Transverse colon (tissue), 4 donors: ENCODE measurements at regions of chr15 and their contacts with region 1.

Region 1: GRCh38 chr15:95994418-95994817 is 336.1 kb upstream of the NR2F2 start:
- DNase-seq: no peak
- H3K4me3 ChIP-seq: no peak overlapping the region
- H3K27ac ChIP-seq: no peak overlapping the region
- H3K4me1 ChIP-seq: peaks cover 0 to 5% (median 0%) of the 10 kb centered on the region in 4 donors
- H3K27me3 ChIP-seq: no peaks in the 10 kb centered on the region
- CTCF ChIP-seq: no peak
- EP300 ChIP-seq: no peak
- POLR2A ChIP-seq: no peak

Region 2: DNA sequence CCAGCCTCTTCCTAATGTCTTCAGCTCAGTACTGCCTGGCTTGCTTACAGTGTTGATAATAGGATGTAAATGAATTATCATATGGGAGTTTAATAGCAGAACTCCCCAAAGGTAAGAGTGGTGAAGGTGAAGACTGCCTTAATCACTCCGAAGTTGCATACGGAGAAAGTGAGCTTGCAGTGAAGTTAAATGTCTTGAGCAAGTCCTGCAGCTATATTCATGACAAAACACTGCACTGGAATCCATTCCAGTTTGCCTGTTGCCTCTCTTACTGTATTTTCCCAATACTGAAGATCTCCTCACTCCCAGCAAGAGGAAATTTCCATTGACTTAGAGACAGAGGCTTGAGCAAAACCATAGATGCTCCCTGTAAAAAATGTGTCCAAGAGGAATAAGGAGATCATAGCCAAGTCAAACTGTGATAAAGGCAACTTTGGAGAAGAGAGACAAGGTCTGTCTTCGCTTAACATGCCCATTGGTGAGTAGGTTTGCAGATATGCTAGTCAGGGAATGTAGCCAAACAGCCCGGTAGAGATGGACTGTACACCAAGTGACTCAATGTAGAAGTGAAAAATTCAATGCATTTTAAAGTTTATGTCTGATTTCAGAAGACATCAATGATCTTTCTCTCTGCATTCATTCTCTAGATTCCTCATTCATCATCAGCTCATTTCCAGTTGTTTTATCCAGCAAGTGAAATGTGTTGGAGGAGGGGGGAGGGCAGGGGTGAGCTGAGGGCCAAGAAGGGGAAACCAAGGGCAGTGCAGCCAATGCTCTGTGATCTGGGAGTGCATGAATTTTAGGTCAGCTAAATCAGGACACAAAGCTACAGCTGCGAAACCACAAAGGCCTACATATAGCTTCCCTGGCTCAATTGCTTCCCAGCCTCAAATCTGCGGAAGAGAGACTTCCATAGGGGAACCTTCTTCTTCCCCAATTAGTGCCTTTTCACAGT is 331.0 kb before region 1 on chr15:
- in situ Hi-C with region 1: no loop called
- intact Hi-C with region 1: no loop called
- DNase-seq: no peak
- H3K4me3 ChIP-seq: no peak overlapping the region
- H3K27ac ChIP-seq: no peak overlapping the region
- H3K4me1 ChIP-seq: no peaks in the 10 kb centered on the region
- H3K27me3 ChIP-seq: no peaks in the 10 kb centered on the region
- CTCF ChIP-seq: no peak
- EP300 ChIP-seq: no peak
- POLR2A ChIP-seq: no peak

Region 3: DNA sequence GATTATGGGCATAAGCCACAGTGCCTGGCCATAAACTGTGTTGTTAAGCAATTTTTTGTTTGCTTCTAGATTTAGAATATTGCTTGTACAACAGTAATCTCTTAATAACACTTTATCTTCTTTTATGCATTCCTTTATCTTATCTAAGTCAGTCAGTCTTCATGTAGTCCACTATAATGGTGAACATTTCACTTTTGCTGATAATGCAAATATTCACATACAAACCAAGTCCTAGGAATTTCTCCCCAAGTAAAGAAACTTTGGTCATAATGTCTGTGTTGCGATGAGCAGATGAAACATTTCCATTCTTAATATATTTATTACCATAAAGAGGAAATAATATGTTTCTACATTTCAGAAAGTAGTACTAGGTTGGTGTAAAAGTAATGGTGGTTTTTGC is 1200.3 kb after region 1 on chr15:
- in situ Hi-C with region 1: no loop called
- intact Hi-C with region 1: loop called (anchors 5 kb)
- DNase-seq: no peak
- H3K4me3 ChIP-seq: no peak overlapping the region
- H3K27ac ChIP-seq: no peak overlapping the region
- H3K4me1 ChIP-seq: no peaks in the 10 kb centered on the region
- H3K27me3 ChIP-seq: no peaks in the 10 kb centered on the region
- CTCF ChIP-seq: no peak
- EP300 ChIP-seq: no peak
- POLR2A ChIP-seq: no peak